Endothelial cell of umbilical vein (primary cell): ENCODE measurements at regions of chr15 and their contacts with region 1.

Region 1: GRCh38 chr15:30870681-30871080 is 33.0 kb upstream of the FAN1 start:
- DNase-seq: no peak
- H3K4me3 ChIP-seq: no peak overlapping the region
- H3K27ac ChIP-seq: no peak overlapping the region
- H3K4me1 ChIP-seq: no peaks in the 10 kb centered on the region
- H3K27me3 ChIP-seq: no peaks in the 10 kb centered on the region
- CTCF ChIP-seq: no peak
- POLR2A ChIP-seq: no peak

Region 2: GRCh38 chr15:30859091-30859874 is 11.4 kb before region 1 on chr15:
- CTCF ChIA-PET with region 1: interaction called, 16 read pairs
- POLR2A ChIA-PET with region 1: no interaction called
- dilution Hi-C with region 1: no loop called
- intact Hi-C with region 1: no loop called
- DNase-seq: peak; percentile 62
- H3K4me3 ChIP-seq: no peak overlapping the region
- H3K27ac ChIP-seq: no peak overlapping the region
- H3K4me1 ChIP-seq: no peaks in the 10 kb centered on the region
- H3K27me3 ChIP-seq: peaks cover 2 to 3% of the 10 kb centered on the region in 2 experiments
- CTCF ChIP-seq: peak; percentile 55 to 65
- POLR2A ChIP-seq: no peak